HCT116 (cell line): ENCODE measurements at regions of chr3 and their contacts with region 1.

Region 1: DNA sequence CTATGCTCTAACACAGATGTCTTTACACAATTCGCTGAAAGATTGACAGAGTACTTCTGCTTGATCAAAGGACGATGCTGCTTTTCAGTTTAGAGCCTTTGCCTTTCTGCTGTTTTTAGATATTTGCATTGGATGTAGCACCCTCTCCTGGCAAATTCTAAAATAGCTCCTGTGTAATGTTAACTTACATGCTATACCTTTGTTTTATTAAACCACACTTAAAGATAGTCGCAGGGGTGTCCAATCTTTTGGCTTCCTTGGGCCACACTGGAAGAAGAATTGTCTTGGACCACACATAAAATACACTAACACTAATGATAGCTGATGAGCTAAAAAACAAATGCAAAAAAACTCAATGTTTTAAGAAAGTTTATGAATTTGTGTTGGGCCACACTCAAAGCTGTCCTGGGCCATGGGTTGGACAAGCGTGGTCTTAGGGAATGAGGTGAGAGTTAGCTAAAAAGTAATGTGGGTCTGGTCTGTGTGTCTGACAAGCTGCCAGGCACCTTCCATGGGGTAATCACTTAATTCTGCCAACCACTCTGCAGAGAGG is 62.9 kb downstream of the ATG7 start:
- DNase-seq: peak; percentile 51
- ATAC-seq: peak; percentile 88
- H3K4me3 ChIP-seq: no peak overlapping the region
- H3K27ac ChIP-seq: no peak overlapping the region
- H3K4me1 ChIP-seq: peaks cover 5 to 12% of the 10 kb centered on the region in 2 experiments; a peak in 3 of 4 replicates
- H3K27me3 ChIP-seq: no peaks in the 10 kb centered on the region
- CTCF ChIP-seq: peak; percentile 53 to 81 (median 66)
- POLR2A ChIP-seq: no peak
- RAD21 ChIP-seq: peak; percentile 87

Region 2: DNA sequence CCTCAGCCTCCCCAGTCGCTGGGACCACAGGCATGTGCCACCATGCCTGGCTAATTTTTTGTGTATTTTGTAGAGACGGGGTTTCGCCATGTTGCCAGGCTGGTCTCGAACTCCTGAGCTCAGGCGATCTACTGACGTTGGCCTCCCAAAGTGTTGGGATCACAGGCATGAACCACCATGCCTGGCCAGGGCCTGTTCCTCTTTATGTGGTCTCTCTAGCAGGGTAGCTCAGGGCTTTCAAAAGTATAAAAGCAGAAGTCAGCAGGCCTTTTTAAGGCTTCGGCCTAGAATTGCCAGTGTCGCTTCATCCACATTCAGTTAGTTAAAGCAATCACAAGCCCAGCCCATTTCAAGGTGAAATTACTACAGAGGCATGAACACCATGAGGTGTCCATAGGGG is 1185.9 kb before region 1 on chr3:
- CTCF ChIA-PET with region 1: no interaction called
- POLR2A ChIA-PET with region 1: no interaction called
- RAD21 ChIA-PET with region 1: no interaction called
- intact Hi-C with region 1: no loop called
- DNase-seq: no peak
- ATAC-seq: no peak
- H3K4me3 ChIP-seq: no peak overlapping the region
- H3K27ac ChIP-seq: no peak overlapping the region
- H3K4me1 ChIP-seq: no peaks in the 10 kb centered on the region
- H3K27me3 ChIP-seq: no peaks in the 10 kb centered on the region
- CTCF ChIP-seq: no peak
- POLR2A ChIP-seq: no peak
- RAD21 ChIP-seq: no peak

Region 3: GRCh38 chr3:10758304-10759061 is 576.6 kb before region 1 on chr3:
- CTCF ChIA-PET with region 1: interaction called, 5 read pairs
- POLR2A ChIA-PET with region 1: no interaction called
- RAD21 ChIA-PET with region 1: no interaction called
- intact Hi-C with region 1: loop called (anchors 2 kb)
- DNase-seq: peak; percentile 51
- ATAC-seq: peak; percentile 97
- H3K4me3 ChIP-seq: no peak overlapping the region
- H3K27ac ChIP-seq: no peak overlapping the region
- H3K4me1 ChIP-seq: no peaks in the 10 kb centered on the region
- H3K27me3 ChIP-seq: peaks cover 37% of the 10 kb centered on the region
- CTCF ChIP-seq: peak; percentile 48 to 94 (median 64); a peak in 5 of 6 replicates
- POLR2A ChIP-seq: no peak
- RAD21 ChIP-seq: peak; percentile 93

Region 4: GRCh38 chr3:11155341-11156025 is 179.6 kb before region 1 on chr3:
- CTCF ChIA-PET with region 1: interaction called, 16 read pairs
- POLR2A ChIA-PET with region 1: no interaction called
- RAD21 ChIA-PET with region 1: no interaction called
- intact Hi-C with region 1: loop called (anchors 5 kb)
- DNase-seq: peak; percentile 47
- ATAC-seq: peak; percentile 90
- H3K4me3 ChIP-seq: peak overlapping the region; percentile 48 to 77
- H3K27ac ChIP-seq: no peak overlapping the region; the same call in 1 of the 2 replicates
- H3K4me1 ChIP-seq: peaks cover 10 to 37% of the 10 kb centered on the region in 2 experiments; a peak in 3 of 4 replicates
- H3K27me3 ChIP-seq: no peaks in the 10 kb centered on the region
- CTCF ChIP-seq: peak; percentile 81 to 89 (median 85)
- POLR2A ChIP-seq: no peak
- RAD21 ChIP-seq: peak; percentile 87

Region 5: GRCh38 chr3:11236595-11237461 is 98.3 kb before region 1 on chr3:
- CTCF ChIA-PET with region 1: interaction called, 27 read pairs
- POLR2A ChIA-PET with region 1: no interaction called
- RAD21 ChIA-PET with region 1: interaction called in 1 of 2 experiments, 4 read pairs
- intact Hi-C with region 1: loop called (anchors 2 kb)
- DNase-seq: peak; percentile 64
- ATAC-seq: peak; percentile 88
- H3K4me3 ChIP-seq: no peak overlapping the region
- H3K27ac ChIP-seq: no peak overlapping the region
- H3K4me1 ChIP-seq: peaks cover 3 to 41% of the 10 kb centered on the region in 2 experiments
- H3K27me3 ChIP-seq: no peaks in the 10 kb centered on the region
- CTCF ChIP-seq: peak; percentile 65 to 94 (median 78)
- POLR2A ChIP-seq: no peak
- RAD21 ChIP-seq: peak; percentile 73

Region 6: DNA sequence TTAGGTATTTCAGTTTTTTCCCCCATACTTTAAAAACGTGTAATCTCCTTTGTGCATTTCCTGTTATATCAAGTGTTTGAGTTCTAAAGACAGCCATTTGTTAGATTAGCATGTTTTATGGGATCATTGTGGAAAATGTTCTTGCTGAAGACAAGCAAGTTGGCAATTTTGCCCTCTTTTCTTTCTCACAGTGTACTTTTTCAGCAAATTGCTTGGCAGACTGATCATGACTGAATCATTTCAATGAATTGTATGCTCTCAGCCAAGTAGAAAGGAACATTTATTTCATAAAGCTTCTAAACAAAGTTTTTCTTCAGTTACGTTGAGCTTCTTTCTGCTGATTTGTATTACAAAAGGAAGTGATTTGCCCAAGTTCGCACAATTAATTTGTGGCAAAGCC is 11.3 kb before region 1 on chr3:
- CTCF ChIA-PET with region 1: interaction called, 10 read pairs
- POLR2A ChIA-PET with region 1: no interaction called
- RAD21 ChIA-PET with region 1: no interaction called
- intact Hi-C with region 1: no loop called
- DNase-seq: no peak
- ATAC-seq: no peak
- H3K4me3 ChIP-seq: no peak overlapping the region
- H3K27ac ChIP-seq: no peak overlapping the region
- H3K4me1 ChIP-seq: no peaks in the 10 kb centered on the region
- H3K27me3 ChIP-seq: no peaks in the 10 kb centered on the region
- CTCF ChIP-seq: no peak
- POLR2A ChIP-seq: no peak
- RAD21 ChIP-seq: no peak

Region 7: DNA sequence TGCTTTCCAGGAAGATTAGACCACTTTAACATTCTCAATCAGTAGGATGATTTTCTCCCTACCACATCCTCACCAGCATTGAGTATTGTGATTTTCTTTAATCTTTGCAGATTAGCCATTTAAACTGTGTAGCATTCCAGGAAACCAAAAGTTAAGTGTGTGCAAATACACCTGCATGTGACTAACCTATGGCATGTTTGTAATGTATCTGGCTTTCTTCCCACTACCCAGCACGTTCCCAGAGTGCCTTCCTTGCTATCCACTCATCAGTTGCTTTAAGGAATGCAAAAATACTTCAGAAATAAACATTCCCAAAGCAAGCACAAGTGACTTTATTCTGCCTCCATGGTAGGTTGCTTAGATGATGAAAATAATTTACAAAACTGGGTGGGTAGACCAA is 11.3 kb after region 1 on chr3:
- CTCF ChIA-PET with region 1: interaction called, 19 read pairs
- POLR2A ChIA-PET with region 1: no interaction called
- RAD21 ChIA-PET with region 1: no interaction called
- intact Hi-C with region 1: no loop called
- DNase-seq: no peak
- ATAC-seq: no peak
- H3K4me3 ChIP-seq: no peak overlapping the region
- H3K27ac ChIP-seq: no peak overlapping the region
- H3K4me1 ChIP-seq: peaks cover 0 to 14% of the 10 kb centered on the region in 2 experiments; a peak in 1 of 4 replicates
- H3K27me3 ChIP-seq: no peaks in the 10 kb centered on the region
- CTCF ChIP-seq: no peak
- POLR2A ChIP-seq: no peak
- RAD21 ChIP-seq: no peak